SK-N-SH (cell line): ENCODE measurements at regions of chr15 and their contacts with region 1.

Region 1: DNA sequence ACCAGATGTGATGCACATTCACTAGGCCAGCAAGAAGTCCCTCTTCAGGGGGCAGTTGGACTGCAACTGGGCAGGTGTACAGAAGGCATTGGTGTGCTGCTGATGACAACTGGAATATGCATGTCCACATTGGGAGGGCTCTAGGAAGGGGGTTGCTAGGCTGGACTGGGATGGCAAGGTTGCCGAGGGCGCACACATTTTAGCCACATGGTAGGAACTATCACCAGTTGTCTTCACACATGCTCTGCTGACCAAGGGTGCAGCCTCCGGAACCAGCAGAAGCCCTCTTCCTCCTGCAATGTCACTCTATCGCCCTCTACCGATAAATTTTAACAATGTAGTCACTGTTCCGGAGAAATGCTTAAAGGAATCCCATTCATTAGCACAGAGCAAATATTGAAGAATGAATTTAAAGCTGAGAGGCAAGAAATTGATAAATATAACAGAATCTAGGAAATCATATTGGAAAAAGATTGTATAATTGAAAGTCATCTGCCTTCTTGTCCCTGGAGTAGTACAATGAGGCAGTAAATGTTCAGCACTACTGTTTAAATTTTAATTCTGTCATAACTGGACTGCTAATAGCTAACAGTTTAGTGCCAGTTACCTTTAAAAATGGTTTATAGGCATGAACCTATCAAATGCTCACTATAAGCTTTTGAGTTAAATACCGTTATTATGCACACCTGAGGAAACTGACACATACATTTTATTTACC is 22.6 kb upstream of the LYSMD4 start:
- DNase-seq: peak; percentile 68
- H3K4me3 ChIP-seq: no peak overlapping the region; a peak in 1 of 4 replicates
- H3K27ac ChIP-seq: no peak overlapping the region
- H3K4me1 ChIP-seq: no peaks in the 10 kb centered on the region; a peak in 1 of 4 replicates
- H3K27me3 ChIP-seq: no peaks in the 10 kb centered on the region
- CTCF ChIP-seq: peak; percentile 83
- EP300 ChIP-seq: no peak
- RAD21 ChIP-seq: peak; percentile 84

Region 2: DNA sequence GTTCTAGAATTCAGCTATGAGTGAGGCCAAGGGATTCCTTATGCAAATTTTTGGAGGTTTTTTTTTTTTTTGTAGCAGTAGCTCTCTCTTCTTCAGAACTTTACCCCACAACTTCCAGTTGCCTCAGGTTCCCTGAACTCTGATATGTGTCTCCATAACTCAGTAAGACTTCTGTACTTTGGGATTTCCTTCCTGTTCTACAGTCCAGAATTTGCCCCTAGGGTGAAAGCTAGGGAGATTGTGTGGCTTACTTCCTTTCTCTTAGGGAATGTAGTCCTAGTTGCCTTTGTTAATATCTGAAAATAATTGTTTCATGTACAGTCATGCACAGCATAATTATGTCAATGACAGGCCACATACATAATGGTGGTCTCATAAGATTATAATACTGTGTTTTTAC is 473.7 kb before region 1 on chr15:
- CTCF ChIA-PET with region 1: interaction called, 14 read pairs
- POLR2A ChIA-PET with region 1: no interaction called
- DNase-seq: no peak
- H3K4me3 ChIP-seq: no peak overlapping the region
- H3K27ac ChIP-seq: no peak overlapping the region
- H3K4me1 ChIP-seq: peaks cover 0 to 8% of the 10 kb centered on the region in 2 experiments; a peak in 2 of 4 replicates
- H3K27me3 ChIP-seq: no peaks in the 10 kb centered on the region
- CTCF ChIP-seq: no peak
- EP300 ChIP-seq: no peak
- RAD21 ChIP-seq: no peak

Region 3: DNA sequence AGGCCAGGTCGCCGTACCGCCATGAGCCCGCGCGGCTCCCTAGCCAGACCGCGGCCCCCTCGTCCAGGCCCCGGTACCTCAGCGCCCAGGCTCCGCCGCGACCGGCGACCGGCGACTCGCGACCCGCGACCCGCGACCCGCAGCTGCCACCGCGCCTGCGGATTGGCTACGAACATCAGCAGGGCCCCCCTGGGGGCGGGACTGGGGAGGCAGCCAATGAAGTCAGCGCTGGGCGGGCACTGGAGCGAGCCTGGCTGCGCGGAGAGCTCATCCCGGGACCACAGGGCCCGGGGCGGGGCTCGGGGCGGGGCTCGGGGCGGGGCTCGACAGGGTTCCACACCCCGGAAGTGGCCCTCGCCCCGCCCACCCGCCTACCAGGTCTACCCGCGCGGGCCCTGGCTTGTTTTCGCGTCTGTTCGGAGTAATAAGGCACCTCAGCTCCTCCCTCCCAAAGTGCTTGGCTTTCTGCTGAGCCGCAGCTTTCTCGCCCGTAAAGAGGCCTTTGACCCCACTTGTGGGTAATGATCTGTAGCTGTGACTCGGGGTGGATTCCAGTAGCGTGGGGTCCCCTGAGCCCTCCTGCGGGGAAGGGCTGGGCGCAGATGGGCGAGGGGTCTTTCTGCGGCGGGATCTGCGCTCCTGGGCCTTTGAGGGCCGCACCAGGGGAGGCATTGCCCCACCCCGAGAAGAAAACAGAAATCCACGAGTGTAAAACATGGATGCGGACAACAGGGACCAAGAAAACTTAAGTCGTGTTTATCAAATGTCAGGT is 22.4 kb before region 1 on chr15 and contains the start of gene LYSMD4:
- CTCF ChIA-PET with region 1: interaction called, 10 read pairs
- POLR2A ChIA-PET with region 1: no interaction called
- DNase-seq: peak; percentile 100
- H3K4me3 ChIP-seq: peak within 1 kb of the TSS; percentile 83 to 88
- H3K27ac ChIP-seq: peak within 1 kb of the TSS in 1 of 2 experiments; percentile 58; a peak in 1 of 4 replicates
- H3K4me1 ChIP-seq: peaks cover 0 to 10% of the 10 kb centered on the region in 2 experiments; a peak in 1 of 4 replicates
- H3K27me3 ChIP-seq: no peaks in the 10 kb centered on the region
- CTCF ChIP-seq: no peak
- EP300 ChIP-seq: no peak
- RAD21 ChIP-seq: no peak
- polyA plus RNA-seq, gene LYSMD4: 5.1 and 6.1 TPM in 2 replicates